ENCODE measurements at regions of chr2 and their contacts with region 1.

Region 1: GRCh38 chr2:71510196-71510807 is 56.9 kb downstream of the DYSF start:
- DNase-seq: peak; percentile 27
- H3K4me3 ChIP-seq: no peak overlapping the region
- H3K27ac ChIP-seq: no peak overlapping the region
- H3K27me3 ChIP-seq: peaks cover 18% of the 10 kb centered on the region
- CTCF ChIP-seq: peak; percentile 94

Region 2: GRCh38 chr2:71306762-71307161 is 203.5 kb before region 1 on chr2:
- CTCF ChIA-PET with region 1: interaction called, 467 read pairs
- POLR2A ChIA-PET with region 1: no interaction called
- DNase-seq: no peak
- H3K4me3 ChIP-seq: no peak overlapping the region
- H3K27ac ChIP-seq: no peak overlapping the region
- H3K27me3 ChIP-seq: peaks cover 2% of the 10 kb centered on the region
- CTCF ChIP-seq: no peak

Region 3: DNA sequence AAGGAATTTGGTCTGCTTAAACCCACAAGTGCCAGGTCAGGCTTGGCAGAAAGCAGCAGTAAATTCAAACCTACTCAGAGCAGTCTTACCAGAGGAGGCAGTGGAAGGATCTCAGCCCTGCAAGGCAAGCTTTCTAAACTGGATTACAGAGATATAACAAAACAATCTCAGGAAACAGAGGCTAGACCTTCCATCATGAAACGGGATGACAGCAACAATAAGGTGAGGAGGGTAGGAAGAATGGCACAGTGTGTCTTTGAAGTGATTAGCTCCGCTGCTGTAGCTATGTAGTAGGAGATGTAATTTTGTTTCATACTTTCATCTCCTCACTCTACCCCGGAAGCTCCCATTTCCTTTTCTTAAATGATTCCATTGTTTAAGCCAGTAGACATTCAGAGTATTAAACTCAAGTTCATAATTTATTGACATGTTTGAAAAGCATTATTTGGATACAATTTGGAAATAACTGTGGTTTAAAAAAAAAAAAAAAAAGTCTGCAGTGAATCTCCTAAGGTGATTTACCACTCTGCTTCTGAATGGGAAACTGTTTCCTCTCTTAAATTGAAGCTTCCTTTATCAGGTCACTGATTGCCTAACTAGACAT is 86.4 kb before region 1 on chr2:
- CTCF ChIA-PET with region 1: interaction called, 12 read pairs
- POLR2A ChIA-PET with region 1: no interaction called
- DNase-seq: no peak
- H3K4me3 ChIP-seq: no peak overlapping the region
- H3K27ac ChIP-seq: no peak overlapping the region
- H3K27me3 ChIP-seq: no peaks in the 10 kb centered on the region
- CTCF ChIP-seq: no peak

Region 4: DNA sequence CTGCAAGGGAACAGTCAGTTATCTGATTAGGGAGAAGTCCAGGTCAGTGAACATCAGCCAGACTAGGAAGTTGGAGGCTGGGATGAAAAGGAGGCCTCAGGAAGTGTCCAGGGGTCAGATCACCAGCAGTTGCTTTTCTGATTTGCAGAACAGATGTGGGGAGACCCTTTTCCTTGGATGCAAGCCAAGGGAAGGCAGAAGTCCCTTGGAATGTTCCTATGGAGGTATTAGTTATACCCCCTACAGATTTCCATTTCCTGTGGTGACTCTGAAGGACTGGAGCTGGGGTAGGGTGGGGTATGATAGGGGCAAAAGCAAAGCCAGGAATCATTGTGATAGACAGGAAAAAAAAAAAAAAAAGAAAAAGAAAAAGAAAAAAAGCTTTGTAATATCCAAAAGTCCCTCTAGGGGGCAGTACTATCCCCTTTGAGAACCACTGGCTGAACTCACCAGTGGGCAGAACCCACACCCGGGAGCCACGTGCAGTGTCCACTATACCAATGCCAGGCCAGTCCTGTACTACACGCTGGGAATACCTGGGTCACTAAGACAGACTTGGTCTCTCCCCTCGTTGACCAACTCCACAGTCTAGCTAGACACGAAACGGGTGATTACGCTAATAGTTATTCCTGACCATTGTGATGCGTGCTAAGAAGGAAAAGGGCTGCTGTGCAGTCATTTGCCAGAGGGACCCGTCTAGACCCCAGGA is 49.6 kb before region 1 on chr2:
- CTCF ChIA-PET with region 1: interaction called, 58 read pairs
- POLR2A ChIA-PET with region 1: interaction called, 3 read pairs
- DNase-seq: no peak
- H3K4me3 ChIP-seq: no peak overlapping the region
- H3K27ac ChIP-seq: no peak overlapping the region
- H3K27me3 ChIP-seq: peaks cover 34% of the 10 kb centered on the region
- CTCF ChIP-seq: peak; percentile 65

Region 5: GRCh38 chr2:71498261-71498701 is 12.0 kb before region 1 on chr2:
- CTCF ChIA-PET with region 1: interaction called, 12 read pairs
- POLR2A ChIA-PET with region 1: no interaction called
- DNase-seq: peak; percentile 26
- H3K4me3 ChIP-seq: no peak overlapping the region
- H3K27ac ChIP-seq: peak overlapping the region; percentile 53
- H3K27me3 ChIP-seq: no peaks in the 10 kb centered on the region
- CTCF ChIP-seq: no peak

Region 6: GRCh38 chr2:71521436-71521950 is 11.2 kb after region 1 on chr2:
- CTCF ChIA-PET with region 1: interaction called, 16 read pairs
- POLR2A ChIA-PET with region 1: no interaction called
- DNase-seq: no peak
- H3K4me3 ChIP-seq: no peak overlapping the region
- H3K27ac ChIP-seq: no peak overlapping the region
- H3K27me3 ChIP-seq: peaks cover 32% of the 10 kb centered on the region
- CTCF ChIP-seq: no peak

Region 7: GRCh38 chr2:72263043-72263775 is 752.9 kb after region 1 on chr2:
- CTCF ChIA-PET with region 1: interaction called, 14 read pairs
- POLR2A ChIA-PET with region 1: no interaction called
- DNase-seq: no peak
- H3K4me3 ChIP-seq: no peak overlapping the region
- H3K27ac ChIP-seq: no peak overlapping the region
- H3K27me3 ChIP-seq: no peaks in the 10 kb centered on the region
- CTCF ChIP-seq: no peak

Measured in AG04450 (cell line).